ENCODE measurements at regions of chr6 and their contacts with region 1.

Region 1: DNA sequence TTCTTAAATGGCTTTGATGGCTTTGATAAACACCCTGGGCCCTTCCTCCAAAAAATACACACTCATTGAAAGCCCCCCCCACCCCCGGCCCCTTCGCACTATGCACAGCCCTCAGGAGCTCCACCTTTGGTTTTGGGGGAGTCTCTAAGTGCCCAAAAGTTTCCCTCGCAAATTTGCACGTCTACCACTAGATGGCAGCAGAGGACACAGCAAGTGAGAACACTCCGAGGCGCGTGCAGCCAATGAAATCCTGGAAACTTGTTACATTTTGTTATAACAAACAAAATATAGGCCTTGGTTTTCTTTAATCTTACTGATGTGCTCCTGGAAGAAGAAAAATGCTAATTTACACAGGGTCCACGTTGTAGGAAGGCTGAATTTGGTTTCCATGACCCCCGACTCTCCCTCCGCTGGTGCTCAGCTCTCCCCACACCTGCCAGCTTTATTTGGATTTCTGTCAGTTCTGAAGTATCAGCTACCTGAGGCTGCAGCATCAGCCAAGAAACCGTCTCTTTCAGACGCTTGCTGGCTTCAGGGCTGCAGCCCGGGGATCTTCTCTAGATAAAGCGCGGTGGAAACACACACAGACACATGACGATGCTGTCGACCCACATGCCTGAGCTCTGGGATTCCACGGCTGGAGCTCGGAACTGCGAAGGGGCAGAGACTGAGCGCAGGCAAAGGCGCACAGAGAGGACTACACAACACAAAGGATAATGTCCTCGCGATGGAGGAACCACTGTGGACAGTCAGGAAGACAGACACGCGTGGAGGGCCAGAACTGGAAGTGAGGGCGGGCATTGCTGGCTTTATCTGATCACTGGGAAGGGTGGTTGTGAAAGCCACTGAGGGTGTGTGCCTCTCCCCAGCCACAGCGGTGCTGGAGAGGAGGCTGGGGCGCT is 148.4 kb upstream of the RPS6KA2 start:
- DNase-seq: peak; percentile 48
- H3K4me3 ChIP-seq: no peak overlapping the region
- H3K27ac ChIP-seq: no peak overlapping the region
- H3K4me1 ChIP-seq: no peaks in the 10 kb centered on the region
- H3K27me3 ChIP-seq: no peaks in the 10 kb centered on the region
- CTCF ChIP-seq: peak; percentile 79 to 81
- POLR2A ChIP-seq: no peak

Region 2: GRCh38 chr6:166275714-166276166 is 499.7 kb before region 1 on chr6:
- CTCF ChIA-PET with region 1: no interaction called
- POLR2A ChIA-PET with region 1: no interaction called
- dilution Hi-C with region 1: no loop called
- intact Hi-C with region 1: loop called (anchors 5 kb)
- DNase-seq: peak; percentile 54
- H3K4me3 ChIP-seq: no peak overlapping the region
- H3K27ac ChIP-seq: no peak overlapping the region
- H3K4me1 ChIP-seq: no peaks in the 10 kb centered on the region
- H3K27me3 ChIP-seq: no peaks in the 10 kb centered on the region
- CTCF ChIP-seq: peak; percentile 93 to 98
- POLR2A ChIP-seq: no peak

Region 3: GRCh38 chr6:166707045-166707444 is 68.4 kb before region 1 on chr6:
- CTCF ChIA-PET with region 1: interaction called, 10 read pairs
- POLR2A ChIA-PET with region 1: no interaction called
- dilution Hi-C with region 1: no loop called
- intact Hi-C with region 1: loop called (anchors 2 kb)
- DNase-seq: peak; percentile 54
- H3K4me3 ChIP-seq: no peak overlapping the region
- H3K27ac ChIP-seq: no peak overlapping the region
- H3K4me1 ChIP-seq: no peaks in the 10 kb centered on the region
- H3K27me3 ChIP-seq: peaks cover 8% of the 10 kb centered on the region in 2 experiments
- CTCF ChIP-seq: peak; percentile 27 to 76
- POLR2A ChIP-seq: no peak

Region 4: GRCh38 chr6:166786704-166787293 is 11.4 kb after region 1 on chr6:
- CTCF ChIA-PET with region 1: interaction called, 11 read pairs
- POLR2A ChIA-PET with region 1: no interaction called
- dilution Hi-C with region 1: no loop called
- intact Hi-C with region 1: no loop called
- DNase-seq: peak; percentile 61
- H3K4me3 ChIP-seq: no peak overlapping the region
- H3K27ac ChIP-seq: no peak overlapping the region
- H3K4me1 ChIP-seq: no peaks in the 10 kb centered on the region
- H3K27me3 ChIP-seq: no peaks in the 10 kb centered on the region
- CTCF ChIP-seq: peak; percentile 49 to 50
- POLR2A ChIP-seq: no peak

Region 5: GRCh38 chr6:166956444-166957086 is 181.1 kb after region 1 on chr6 and contains the start of gene RNASET2:
- CTCF ChIA-PET with region 1: interaction called, 14 read pairs
- POLR2A ChIA-PET with region 1: no interaction called
- dilution Hi-C with region 1: no loop called
- intact Hi-C with region 1: loop called (anchors 1 kb)
- DNase-seq: peak; percentile 91
- H3K4me3 ChIP-seq: peak within 1 kb of the TSS; percentile 60 to 63 (median 61)
- H3K27ac ChIP-seq: no peak within 1 kb of the TSS
- H3K4me1 ChIP-seq: peaks cover 21% of the 10 kb centered on the region
- H3K27me3 ChIP-seq: no peaks in the 10 kb centered on the region
- CTCF ChIP-seq: no peak
- POLR2A ChIP-seq: peak; percentile 20
- total RNA-seq, gene RNASET2: 10.0 and 10.7 TPM in 2 replicates

Region 6: DNA sequence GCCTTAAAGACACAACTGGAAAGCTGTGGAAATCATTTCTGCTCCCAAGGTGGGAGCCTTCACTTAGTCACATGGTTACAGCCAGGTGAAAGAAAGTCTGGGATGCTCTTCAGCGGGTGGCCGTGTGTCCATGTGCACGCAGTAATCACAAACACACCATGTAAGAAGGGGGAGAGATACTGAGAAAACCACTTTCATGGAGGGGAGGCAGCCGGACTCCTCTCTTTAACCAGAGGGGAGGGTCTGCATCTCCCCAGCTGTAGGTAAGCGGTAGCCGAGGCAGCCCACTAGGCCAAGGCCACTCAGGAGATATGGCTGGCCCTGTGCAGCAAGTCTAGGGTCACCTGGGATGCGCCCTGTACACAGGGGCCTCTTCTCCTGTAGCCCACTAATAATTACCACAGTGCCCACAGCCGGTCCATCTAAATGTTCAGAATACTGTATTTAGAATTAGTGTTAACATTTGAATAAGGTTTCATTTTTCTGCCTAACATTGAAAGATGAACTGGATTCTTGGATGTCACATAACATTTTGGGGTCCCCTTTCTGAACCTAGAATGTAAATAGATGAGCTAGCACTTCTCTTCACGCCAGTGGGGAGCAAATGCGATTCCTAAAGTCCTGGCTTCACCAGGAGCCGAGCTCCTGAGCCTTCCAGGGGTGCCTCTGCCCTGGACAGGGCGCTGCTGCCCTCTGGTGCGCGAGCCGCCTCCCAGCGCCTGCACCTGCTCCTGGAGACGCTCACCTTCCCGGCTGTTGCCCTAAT is 366.4 kb after region 1 on chr6:
- CTCF ChIA-PET with region 1: interaction called, 24 read pairs
- POLR2A ChIA-PET with region 1: no interaction called
- dilution Hi-C with region 1: no loop called
- intact Hi-C with region 1: no loop called
- DNase-seq: peak; percentile 11
- H3K4me3 ChIP-seq: no peak overlapping the region
- H3K27ac ChIP-seq: no peak overlapping the region
- H3K4me1 ChIP-seq: no peaks in the 10 kb centered on the region
- H3K27me3 ChIP-seq: no peaks in the 10 kb centered on the region
- CTCF ChIP-seq: peak; percentile 33 to 66
- POLR2A ChIP-seq: no peak

Measured in endothelial cell of umbilical vein (primary cell).